ENCODE measurements at regions of chr12 and their contacts with region 1.

Region 1: GRCh38 chr12:11486623-11487444 is 91.5 kb upstream of the PRB2 start:
- DNase-seq: peak; percentile 66
- H3K4me3 ChIP-seq: peak overlapping the region in 1 of 2 experiments; percentile 57; a peak in 1 of 4 replicates
- H3K27ac ChIP-seq: no peak overlapping the region
- H3K4me1 ChIP-seq: no peaks in the 10 kb centered on the region
- H3K27me3 ChIP-seq: 0 out of 2 replicates have a peak, but pooled peaks cover 4% of the 10 kb centered on the region
- CTCF ChIP-seq: peak; percentile 99
- EP300 ChIP-seq: no peak
- RAD21 ChIP-seq: peak; percentile 91

Region 2: GRCh38 chr12:10759657-10760056 is 727.2 kb before region 1 on chr12:
- CTCF ChIA-PET with region 1: interaction called, 10 read pairs
- POLR2A ChIA-PET with region 1: no interaction called
- DNase-seq: no peak
- H3K4me3 ChIP-seq: no peak overlapping the region
- H3K27ac ChIP-seq: no peak overlapping the region
- H3K4me1 ChIP-seq: no peaks in the 10 kb centered on the region
- H3K27me3 ChIP-seq: no peaks in the 10 kb centered on the region
- CTCF ChIP-seq: no peak
- EP300 ChIP-seq: no peak
- RAD21 ChIP-seq: no peak

Region 3: GRCh38 chr12:10771132-10771733 is 715.6 kb before region 1 on chr12:
- CTCF ChIA-PET with region 1: interaction called, 124 read pairs
- POLR2A ChIA-PET with region 1: no interaction called
- DNase-seq: peak; percentile 22
- H3K4me3 ChIP-seq: no peak overlapping the region
- H3K27ac ChIP-seq: no peak overlapping the region
- H3K4me1 ChIP-seq: no peaks in the 10 kb centered on the region
- H3K27me3 ChIP-seq: peaks cover 25% of the 10 kb centered on the region; the same call in 1 of the 2 replicates
- CTCF ChIP-seq: peak; percentile 78
- EP300 ChIP-seq: no peak
- RAD21 ChIP-seq: peak; percentile 87

Region 4: GRCh38 chr12:11202811-11203210 is 284.0 kb before region 1 on chr12:
- CTCF ChIA-PET with region 1: interaction called, 30 read pairs
- POLR2A ChIA-PET with region 1: no interaction called
- DNase-seq: no peak
- H3K4me3 ChIP-seq: no peak overlapping the region
- H3K27ac ChIP-seq: no peak overlapping the region
- H3K4me1 ChIP-seq: no peaks in the 10 kb centered on the region
- H3K27me3 ChIP-seq: no peaks in the 10 kb centered on the region
- CTCF ChIP-seq: no peak
- EP300 ChIP-seq: no peak
- RAD21 ChIP-seq: no peak

Region 5: GRCh38 chr12:11228296-11228879 is 258.4 kb before region 1 on chr12:
- CTCF ChIA-PET with region 1: interaction called, 59 read pairs
- POLR2A ChIA-PET with region 1: no interaction called
- DNase-seq: peak; percentile 40
- H3K4me3 ChIP-seq: no peak overlapping the region; a peak in 1 of 4 replicates
- H3K27ac ChIP-seq: no peak overlapping the region
- H3K4me1 ChIP-seq: no peaks in the 10 kb centered on the region
- H3K27me3 ChIP-seq: no peaks in the 10 kb centered on the region
- CTCF ChIP-seq: peak; percentile 75
- EP300 ChIP-seq: no peak
- RAD21 ChIP-seq: peak; percentile 69

Region 6: GRCh38 chr12:11500178-11500860 is 13.5 kb after region 1 on chr12:
- CTCF ChIA-PET with region 1: interaction called, 11 read pairs
- POLR2A ChIA-PET with region 1: no interaction called
- DNase-seq: peak; percentile 74
- H3K4me3 ChIP-seq: peak overlapping the region in 1 of 2 experiments; percentile 14; a peak in 2 of 4 replicates
- H3K27ac ChIP-seq: no peak overlapping the region
- H3K4me1 ChIP-seq: peaks cover 0 to 7% of the 10 kb centered on the region in 2 experiments; a peak in 1 of 4 replicates
- H3K27me3 ChIP-seq: no peaks in the 10 kb centered on the region
- CTCF ChIP-seq: no peak
- EP300 ChIP-seq: no peak
- RAD21 ChIP-seq: no peak

Region 7: DNA sequence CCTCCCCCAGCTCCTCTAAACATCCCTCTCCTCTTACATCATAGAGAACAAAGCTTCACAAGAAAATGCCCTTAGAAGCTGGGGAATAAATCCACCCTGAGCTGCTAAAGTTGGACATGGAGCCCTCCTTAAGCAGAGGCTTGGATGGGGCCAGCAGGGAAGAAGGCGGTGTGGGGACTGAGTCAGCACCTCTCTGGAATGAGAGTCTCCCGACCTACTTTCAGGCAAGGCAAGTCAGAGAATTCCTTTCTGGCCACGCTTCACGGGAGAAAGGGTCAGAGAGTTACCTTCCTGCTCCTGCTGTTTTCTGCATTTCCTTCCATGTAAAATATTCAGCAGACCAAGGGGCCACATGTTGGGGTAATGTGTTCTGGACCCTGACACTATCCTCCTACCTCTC is 21.9 kb after region 1 on chr12:
- CTCF ChIA-PET with region 1: interaction called, 10 read pairs
- POLR2A ChIA-PET with region 1: no interaction called
- DNase-seq: no peak
- H3K4me3 ChIP-seq: no peak overlapping the region
- H3K27ac ChIP-seq: no peak overlapping the region
- H3K4me1 ChIP-seq: peaks cover 0 to 3% of the 10 kb centered on the region in 2 experiments; a peak in 2 of 4 replicates
- H3K27me3 ChIP-seq: no peaks in the 10 kb centered on the region
- CTCF ChIP-seq: no peak
- EP300 ChIP-seq: no peak
- RAD21 ChIP-seq: no peak

Region 8: GRCh38 chr12:11543457-11544158 is 56.8 kb after region 1 on chr12:
- CTCF ChIA-PET with region 1: no interaction called
- POLR2A ChIA-PET with region 1: no interaction called
- DNase-seq: no peak
- H3K4me3 ChIP-seq: no peak overlapping the region
- H3K27ac ChIP-seq: no peak overlapping the region
- H3K4me1 ChIP-seq: peaks cover 5 to 7% of the 10 kb centered on the region in 2 experiments; a peak in 2 of 4 replicates
- H3K27me3 ChIP-seq: no peaks in the 10 kb centered on the region; the same call in 1 of the 2 replicates
- CTCF ChIP-seq: no peak
- EP300 ChIP-seq: no peak
- RAD21 ChIP-seq: no peak